ENCODE measurements at regions of chr11 and their contacts with region 1.

Region 1: DNA sequence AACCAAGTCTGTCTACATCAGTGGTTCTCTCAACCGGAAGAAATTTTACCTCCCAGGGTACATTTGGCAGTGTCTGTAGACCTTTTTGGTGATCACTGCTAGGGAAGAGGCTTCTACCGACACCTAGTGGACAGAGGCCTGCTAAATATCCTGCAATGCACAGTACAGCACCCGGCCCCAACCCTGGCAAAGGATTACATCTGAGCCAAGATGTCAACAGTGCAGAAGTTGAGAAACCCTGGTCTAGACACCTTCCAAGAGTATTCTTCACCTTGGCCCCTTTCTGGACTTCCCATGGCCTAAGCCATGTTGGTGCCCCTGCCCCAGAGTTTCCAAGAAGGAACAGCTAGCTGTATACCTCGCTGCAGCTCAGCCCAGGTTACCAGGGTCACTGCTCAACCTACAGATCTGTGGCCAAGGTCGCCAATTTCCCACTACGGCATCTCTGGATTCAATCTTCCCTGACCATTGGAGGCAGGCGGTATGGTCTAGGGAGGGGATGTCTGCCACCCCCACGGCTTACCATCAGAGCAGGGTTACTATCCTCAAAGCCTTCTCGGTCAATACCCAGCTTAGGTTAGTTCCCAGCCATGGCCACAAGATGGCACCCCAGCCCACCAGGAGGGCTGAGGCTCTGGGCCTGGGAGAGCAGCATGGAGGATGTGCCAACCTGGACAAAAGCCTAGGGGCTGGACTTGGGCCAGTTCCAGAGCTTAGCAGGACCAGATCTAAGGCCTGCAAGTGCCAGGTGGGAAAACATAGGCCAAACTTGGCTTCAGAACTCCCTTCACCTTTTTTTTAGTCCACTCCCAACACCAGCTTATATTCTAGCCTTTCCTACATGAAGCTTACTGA is 3.7 kb upstream of the KCNC1 start:
- DNase-seq: peak; percentile 79
- ATAC-seq: peak; percentile 90
- H3K4me3 Mint-ChIP-seq: no peak overlapping the region
- H3K27ac Mint-ChIP-seq: no peak overlapping the region
- H3K4me1 Mint-ChIP-seq: peaks cover 3% of the 10 kb centered on the region
- H3K27me3 Mint-ChIP-seq: peaks cover 41% of the 10 kb centered on the region
- CTCF ChIP-seq: peak; percentile 78

Region 2: GRCh38 chr11:17598700-17599459 is 132.0 kb before region 1 on chr11:
- CTCF ChIA-PET with region 1: interaction called, 26 read pairs
- POLR2A ChIA-PET with region 1: no interaction called
- intact Hi-C with region 1: loop called (anchors 5 kb)
- DNase-seq: peak; percentile 86
- ATAC-seq: peak; percentile 97
- H3K4me3 Mint-ChIP-seq: no peak overlapping the region
- H3K27ac Mint-ChIP-seq: no peak overlapping the region
- H3K4me1 Mint-ChIP-seq: peaks cover 8% of the 10 kb centered on the region
- H3K27me3 Mint-ChIP-seq: peaks cover 3% of the 10 kb centered on the region
- CTCF ChIP-seq: peak; percentile 87

Region 3: DNA sequence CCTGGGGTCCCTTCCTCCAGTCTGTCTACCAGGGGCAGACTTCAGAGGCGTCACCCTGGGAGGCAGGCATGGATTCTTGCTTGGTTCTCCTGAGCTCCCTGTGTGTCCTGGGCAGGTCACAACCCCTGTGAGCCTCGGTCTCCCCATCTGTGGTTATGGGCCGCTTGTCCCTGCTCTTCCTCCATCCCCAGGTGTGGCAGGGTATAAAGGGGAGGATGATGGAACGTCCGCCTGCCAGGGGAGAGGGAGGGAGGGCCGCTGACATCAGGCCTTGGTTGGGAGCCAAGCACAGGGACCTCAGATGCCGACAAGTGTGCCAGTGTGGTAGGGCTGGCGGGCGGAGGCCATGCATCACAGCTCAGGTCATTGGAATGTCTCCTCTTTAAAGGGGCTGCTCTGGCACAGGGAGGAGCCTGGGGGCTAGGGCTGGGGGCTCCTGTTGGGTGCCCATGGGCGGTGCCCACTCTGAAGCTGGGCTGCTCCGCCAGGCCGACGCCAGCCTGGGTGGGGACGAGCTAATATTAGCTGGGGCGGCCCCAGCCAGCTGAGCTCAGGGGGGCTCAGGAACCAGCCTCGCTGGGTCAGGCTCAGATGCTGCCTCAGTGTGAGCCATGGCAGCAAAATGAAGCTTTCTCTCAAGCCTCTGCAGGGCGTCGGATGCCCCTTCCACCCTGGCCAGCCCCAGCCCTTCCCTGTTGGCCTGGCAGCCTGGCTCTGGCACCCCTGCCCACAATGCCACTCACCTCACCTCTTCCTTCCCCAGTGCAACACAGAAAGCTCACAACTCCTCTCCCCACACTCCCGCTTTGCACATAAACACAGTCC is 16.5 kb after region 1 on chr11:
- CTCF ChIA-PET with region 1: interaction called, 29 read pairs
- POLR2A ChIA-PET with region 1: no interaction called
- intact Hi-C with region 1: no loop called
- DNase-seq: no peak
- ATAC-seq: no peak
- H3K4me3 Mint-ChIP-seq: no peak overlapping the region
- H3K27ac Mint-ChIP-seq: no peak overlapping the region
- H3K4me1 Mint-ChIP-seq: no peaks in the 10 kb centered on the region
- H3K27me3 Mint-ChIP-seq: peaks cover 9% of the 10 kb centered on the region
- CTCF ChIP-seq: no peak

Region 4: DNA sequence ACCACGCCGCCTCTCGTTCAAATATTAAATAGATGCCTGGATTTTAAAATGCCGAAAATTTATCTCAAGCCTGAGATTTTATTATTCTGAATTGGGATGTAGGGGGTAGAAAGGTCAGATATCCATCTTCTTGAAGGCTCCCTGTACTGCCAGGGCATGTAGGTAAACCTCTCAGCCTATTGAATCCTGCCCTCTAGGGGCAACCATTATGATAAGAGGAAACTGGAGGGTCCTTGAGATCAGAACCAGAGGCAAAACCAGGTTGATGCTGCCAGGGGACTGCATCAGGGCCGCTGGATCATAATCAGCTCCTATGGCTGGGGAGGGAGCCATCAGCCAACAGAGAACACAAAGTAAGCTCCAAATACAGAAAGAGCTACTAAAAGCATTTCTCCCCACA is 96.2 kb after region 1 on chr11:
- CTCF ChIA-PET with region 1: no interaction called
- POLR2A ChIA-PET with region 1: no interaction called
- intact Hi-C with region 1: no loop called
- DNase-seq: no peak
- ATAC-seq: no peak
- H3K4me3 Mint-ChIP-seq: no peak overlapping the region
- H3K27ac Mint-ChIP-seq: no peak overlapping the region
- H3K4me1 Mint-ChIP-seq: no peaks in the 10 kb centered on the region
- H3K27me3 Mint-ChIP-seq: no peaks in the 10 kb centered on the region
- CTCF ChIP-seq: no peak

Region 5: GRCh38 chr11:17972987-17973386 is 242.2 kb after region 1 on chr11:
- CTCF ChIA-PET with region 1: interaction called, 147 read pairs
- POLR2A ChIA-PET with region 1: no interaction called
- intact Hi-C with region 1: loop called (anchors 2 kb)
- DNase-seq: peak; percentile 17
- ATAC-seq: no peak
- H3K4me3 Mint-ChIP-seq: no peak overlapping the region
- H3K27ac Mint-ChIP-seq: no peak overlapping the region
- H3K4me1 Mint-ChIP-seq: no peaks in the 10 kb centered on the region
- H3K27me3 Mint-ChIP-seq: no peaks in the 10 kb centered on the region
- CTCF ChIP-seq: no peak

Region 6: DNA sequence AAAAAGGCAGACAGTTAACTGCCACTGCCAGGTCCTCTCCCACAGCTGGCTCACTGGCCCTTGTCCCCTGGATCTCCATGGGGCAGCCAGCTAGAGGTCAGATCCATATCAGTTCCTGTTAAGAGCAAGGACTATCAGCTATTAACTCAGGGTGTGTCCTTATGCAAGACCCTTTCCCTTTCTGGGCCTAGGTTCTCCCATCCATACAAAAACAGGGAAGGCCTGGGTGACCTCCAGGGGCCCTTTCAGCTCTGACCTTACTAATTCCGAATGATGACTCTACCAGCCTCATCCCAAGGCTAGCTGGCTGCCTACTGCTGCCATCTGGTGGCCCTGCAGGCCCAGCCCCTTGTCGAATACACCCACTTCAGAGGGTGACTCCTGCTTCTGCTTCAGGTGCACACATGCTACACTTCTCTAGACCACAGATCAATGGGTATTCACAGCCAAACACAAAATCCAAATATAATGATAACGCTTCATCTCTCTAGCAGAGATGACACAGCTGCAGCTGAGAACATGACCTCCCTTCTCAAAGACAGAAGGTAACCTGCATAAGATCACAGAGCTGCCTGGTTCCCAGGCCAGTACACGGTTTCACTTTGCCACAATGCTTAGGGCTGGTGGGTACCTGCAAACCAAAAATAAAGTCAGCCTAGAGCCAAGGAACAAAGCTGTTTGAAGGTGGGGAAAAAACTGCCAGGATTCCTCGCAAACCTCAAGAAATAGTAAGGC is 247.9 kb after region 1 on chr11:
- CTCF ChIA-PET with region 1: interaction called, 147 read pairs
- POLR2A ChIA-PET with region 1: no interaction called
- intact Hi-C with region 1: loop called (anchors 2 kb)
- DNase-seq: peak; percentile 41
- ATAC-seq: no peak
- H3K4me3 Mint-ChIP-seq: no peak overlapping the region
- H3K27ac Mint-ChIP-seq: no peak overlapping the region
- H3K4me1 Mint-ChIP-seq: no peaks in the 10 kb centered on the region
- H3K27me3 Mint-ChIP-seq: no peaks in the 10 kb centered on the region
- CTCF ChIP-seq: peak; percentile 32

Region 7: GRCh38 chr11:17991783-17992433 is 261.1 kb after region 1 on chr11:
- CTCF ChIA-PET with region 1: interaction called, 31 read pairs
- POLR2A ChIA-PET with region 1: no interaction called
- intact Hi-C with region 1: no loop called
- DNase-seq: peak; percentile 54
- ATAC-seq: peak; percentile 83
- H3K4me3 Mint-ChIP-seq: no peak overlapping the region
- H3K27ac Mint-ChIP-seq: no peak overlapping the region
- H3K4me1 Mint-ChIP-seq: peaks cover 2% of the 10 kb centered on the region
- H3K27me3 Mint-ChIP-seq: no peaks in the 10 kb centered on the region
- CTCF ChIP-seq: peak; percentile 86